Vagina (tissue), 2 donors: ENCODE measurements at regions of chr14 and their contacts with region 1.

Region 1: GRCh38 chr14:54050759-54051158 is 94.1 kb upstream of the BMP4 start:
- DNase-seq: no peak
- H3K4me3 ChIP-seq: no peak overlapping the region
- H3K27ac ChIP-seq: no peak overlapping the region
- H3K4me1 ChIP-seq: no peaks in the 10 kb centered on the region
- H3K27me3 ChIP-seq: no peaks in the 10 kb centered on the region
- CTCF ChIP-seq: no peak
- POLR2A ChIP-seq: no peak

Region 2: DNA sequence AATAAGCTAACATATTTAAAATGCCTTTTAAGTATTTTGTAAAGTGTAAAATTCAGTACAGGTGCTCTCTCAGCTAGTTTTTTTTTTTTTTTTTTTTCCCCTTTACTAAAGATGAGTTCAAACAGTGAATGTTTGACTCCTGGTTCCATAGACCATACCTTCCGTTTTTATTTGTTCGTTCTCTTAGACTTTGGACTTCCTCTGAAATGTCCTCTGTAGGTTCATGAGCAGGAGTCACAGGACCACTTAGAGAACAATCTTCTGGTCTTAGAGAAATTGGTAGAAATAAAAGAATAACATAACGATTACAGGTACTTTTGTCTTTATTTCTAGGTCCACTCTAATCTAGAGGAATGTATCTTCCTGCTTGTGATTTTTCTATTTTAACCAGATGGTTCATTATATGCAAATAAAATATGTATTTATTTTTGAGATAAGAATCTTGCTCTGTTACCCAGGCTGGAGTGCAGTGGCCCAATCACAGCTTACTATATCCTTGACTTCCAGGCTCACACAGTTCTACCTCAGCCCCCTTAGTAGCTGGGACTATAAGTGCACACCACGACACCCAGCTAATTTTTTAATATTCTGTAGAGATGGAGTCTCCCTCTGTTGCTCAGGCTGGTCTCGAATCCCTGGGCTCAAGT is 1295.0 kb before region 1 on chr14:
- intact Hi-C with region 1: loop called (anchors 5 kb)
- DNase-seq: no peak
- H3K4me3 ChIP-seq: no peak overlapping the region
- H3K27ac ChIP-seq: no peak overlapping the region
- H3K4me1 ChIP-seq: no peaks in the 10 kb centered on the region
- H3K27me3 ChIP-seq: no peaks in the 10 kb centered on the region
- CTCF ChIP-seq: no peak
- POLR2A ChIP-seq: no peak

Region 3: GRCh38 chr14:53814392-53814791 is 236.4 kb before region 1 on chr14:
- intact Hi-C with region 1: no loop called
- DNase-seq: no peak
- H3K4me3 ChIP-seq: no peak overlapping the region
- H3K27ac ChIP-seq: no peak overlapping the region
- H3K4me1 ChIP-seq: no peaks in the 10 kb centered on the region
- H3K27me3 ChIP-seq: no peaks in the 10 kb centered on the region
- CTCF ChIP-seq: no peak
- POLR2A ChIP-seq: no peak

Region 4: DNA sequence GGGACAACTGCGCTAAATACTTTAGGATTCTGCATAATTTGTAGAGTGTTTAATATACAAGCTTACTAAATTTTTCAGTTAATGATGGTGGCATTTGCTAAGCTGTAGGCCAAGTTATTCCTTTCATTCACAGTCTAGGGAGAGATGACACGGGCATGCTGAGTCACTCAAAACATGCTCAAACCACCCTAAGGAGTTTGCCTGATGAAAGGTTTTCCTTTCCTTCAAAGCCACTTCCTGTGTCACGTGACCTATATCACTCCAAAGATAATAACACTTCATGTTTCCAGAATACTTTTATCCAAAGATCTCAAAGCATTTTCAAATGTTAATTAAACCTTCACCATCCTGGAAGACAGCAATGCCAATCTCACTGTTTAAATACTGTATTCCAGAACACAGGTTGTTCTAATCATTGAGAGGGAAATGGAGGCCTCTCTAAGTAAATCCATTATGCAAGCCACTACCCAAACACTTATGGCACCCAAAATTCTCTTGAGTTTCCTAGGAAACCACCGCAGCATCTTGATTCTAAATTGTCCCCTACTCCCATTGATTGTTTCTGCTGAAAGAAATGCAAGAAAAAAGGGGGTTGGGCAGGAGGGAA is 139.1 kb after region 1 on chr14:
- intact Hi-C with region 1: no loop called
- DNase-seq: no peak
- H3K4me3 ChIP-seq: no peak overlapping the region
- H3K27ac ChIP-seq: no peak overlapping the region
- H3K4me1 ChIP-seq: peaks cover 10% of the 10 kb centered on the region
- H3K27me3 ChIP-seq: no peaks in the 10 kb centered on the region
- CTCF ChIP-seq: no peak
- POLR2A ChIP-seq: no peak